Thyroid gland (tissue), 4 donors: ENCODE measurements at regions of chr1 and their contacts with region 1.

Region 1: DNA sequence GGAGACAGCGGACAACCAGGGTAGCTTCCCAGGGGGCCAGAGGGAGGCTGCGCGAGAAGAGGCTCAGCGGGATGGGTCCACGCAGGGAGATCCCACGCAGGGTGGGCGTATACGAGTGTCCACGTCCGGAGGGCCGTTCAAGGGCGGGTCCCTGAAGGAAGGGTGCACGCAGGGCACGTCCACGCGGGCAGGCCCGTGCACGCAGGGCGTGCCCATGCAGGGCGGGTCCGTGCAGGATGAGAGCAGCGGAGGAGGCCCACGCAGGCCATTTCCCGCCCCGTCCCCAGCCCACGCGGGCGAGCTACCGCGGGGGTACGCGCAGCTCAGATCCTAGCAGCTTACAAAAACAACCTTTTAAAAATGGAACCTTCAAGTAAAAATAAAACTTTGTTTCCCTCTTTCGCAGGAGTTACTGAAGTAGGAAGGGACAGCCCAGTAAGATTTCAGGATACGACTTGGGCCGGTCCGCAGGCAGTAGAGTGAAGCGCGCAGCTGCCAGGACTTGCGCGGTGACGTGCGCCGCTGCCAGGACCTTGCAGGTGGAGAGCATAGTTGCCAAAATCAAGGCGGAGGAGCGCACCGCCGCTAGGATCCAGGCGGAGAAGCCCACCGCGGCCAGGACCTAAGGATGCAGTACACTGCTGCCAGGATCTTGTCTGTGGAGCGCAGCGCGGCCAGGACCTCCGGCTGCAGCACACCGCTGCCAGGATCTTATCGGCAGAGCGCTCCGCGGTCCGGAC is 416 bp upstream of the RNF187 start:
- DNase-seq: peak; percentile 70 to 77
- H3K4me3 ChIP-seq: peak overlapping the region; percentile 58 to 81 (median 75)
- H3K27ac ChIP-seq: peak overlapping the region; percentile 98 to 100 (median 99)
- H3K4me1 ChIP-seq: peaks cover 14 to 38% of the 10 kb centered on the region in 2 donors
- H3K27me3 ChIP-seq: no peaks in the 10 kb centered on the region
- CTCF ChIP-seq: peak in 2 of 6 experiments; percentile 16 to 32
- POLR2A ChIP-seq: peak in 1 of 2 donors; percentile 23

Region 2: GRCh38 chr1:228206582-228207351 is 280.0 kb before region 1 on chr1:
- intact Hi-C with region 1: no loop called
- DNase-seq: no peak
- H3K4me3 ChIP-seq: no peak overlapping the region
- H3K27ac ChIP-seq: no peak overlapping the region
- H3K4me1 ChIP-seq: peaks cover 0 to 10% of the 10 kb centered on the region in 2 donors
- H3K27me3 ChIP-seq: no peaks in the 10 kb centered on the region
- CTCF ChIP-seq: no peak
- POLR2A ChIP-seq: no peak

Region 3: GRCh38 chr1:228378090-228378872 is 108.5 kb before region 1 on chr1:
- intact Hi-C with region 1: loop called (anchors 10 kb)
- DNase-seq: peak; percentile 87
- H3K4me3 ChIP-seq: peak overlapping the region in 2 of 3 donors; percentile 44 to 52
- H3K27ac ChIP-seq: peak overlapping the region; percentile 74 to 82 (median 78)
- H3K4me1 ChIP-seq: peaks cover 16 to 35% of the 10 kb centered on the region in 2 donors
- H3K27me3 ChIP-seq: no peaks in the 10 kb centered on the region
- CTCF ChIP-seq: peak in 5 of 6 experiments; percentile 26 to 77 (median 60)
- POLR2A ChIP-seq: peak in 1 of 2 donors; percentile 71

Region 4: DNA sequence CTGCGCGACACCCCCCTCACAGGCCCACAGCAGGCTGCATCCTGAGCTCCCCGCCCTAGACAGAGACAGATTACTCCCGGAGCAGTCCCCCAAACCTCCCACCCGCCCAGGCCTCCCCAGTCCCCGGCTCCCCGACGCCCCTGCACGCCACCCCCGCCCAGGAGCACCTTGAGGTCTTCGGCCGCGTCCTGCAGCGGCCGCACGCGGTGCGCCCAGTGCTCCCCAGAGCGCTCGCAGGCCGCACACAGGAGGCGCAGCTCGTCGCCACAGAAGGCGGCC is 80.8 kb before region 1 on chr1:
- intact Hi-C with region 1: loop called (anchors 5 kb)
- DNase-seq: peak in 1 of 2 donors; percentile 14
- H3K4me3 ChIP-seq: peak overlapping the region; percentile 22 to 89 (median 85)
- H3K27ac ChIP-seq: peak overlapping the region in 2 of 3 donors; percentile 45 to 67
- H3K4me1 ChIP-seq: peaks cover 27 to 31% of the 10 kb centered on the region in 2 donors
- H3K27me3 ChIP-seq: no peaks in the 10 kb centered on the region
- CTCF ChIP-seq: no peak
- POLR2A ChIP-seq: no peak

Region 5: DNA sequence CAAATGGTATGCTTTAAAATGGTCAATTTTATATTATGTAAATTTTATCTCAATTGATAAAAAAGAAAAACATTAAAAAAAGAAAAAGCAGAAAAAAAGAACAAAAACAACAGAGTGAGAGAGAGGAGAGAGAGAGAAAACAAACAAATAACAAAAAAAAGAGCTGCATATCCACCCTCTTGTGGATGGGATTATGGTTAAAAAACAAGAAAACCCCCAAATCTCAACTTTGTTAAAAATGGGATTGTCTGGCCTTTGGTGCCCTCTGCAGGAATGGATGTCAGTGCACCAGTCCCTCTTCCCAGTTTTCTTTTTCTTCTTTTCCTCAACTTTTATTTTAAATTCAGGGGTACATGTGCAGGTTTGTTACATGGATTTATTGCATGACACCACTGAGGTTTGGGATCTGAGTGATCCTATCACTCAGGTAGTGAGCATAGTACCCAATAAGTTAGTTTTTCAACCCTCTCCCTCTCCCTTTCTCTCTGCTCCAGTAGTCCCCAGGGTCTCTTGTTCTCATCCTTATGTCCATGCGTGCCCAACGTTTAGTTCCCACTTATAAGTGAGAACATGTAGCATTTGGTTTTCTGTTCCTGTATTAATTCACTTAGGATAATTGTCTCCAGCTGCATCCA is 28.6 kb after region 1 on chr1:
- intact Hi-C with region 1: no loop called
- DNase-seq: peak in 1 of 2 donors; percentile 23
- H3K4me3 ChIP-seq: no peak overlapping the region
- H3K27ac ChIP-seq: no peak overlapping the region
- H3K4me1 ChIP-seq: no peaks in the 10 kb centered on the region
- H3K27me3 ChIP-seq: no peaks in the 10 kb centered on the region
- CTCF ChIP-seq: peak; percentile 12 to 88 (median 62)
- POLR2A ChIP-seq: no peak